Activated T-helper 2 cell treated with anti-CD3 and anti-CD28 coated beads, Interferon-gamma antibody, Interleukin-2, Interleukin-4, amounts not matched to agents 10 μg/mL and 5 μg/mL and 100 μg/mL, durations not matched to agents 14 hours and 24 hours and 36 hours (primary cell): ENCODE measurements at regions of chrX and their contacts with region 1.

Region 1: DNA sequence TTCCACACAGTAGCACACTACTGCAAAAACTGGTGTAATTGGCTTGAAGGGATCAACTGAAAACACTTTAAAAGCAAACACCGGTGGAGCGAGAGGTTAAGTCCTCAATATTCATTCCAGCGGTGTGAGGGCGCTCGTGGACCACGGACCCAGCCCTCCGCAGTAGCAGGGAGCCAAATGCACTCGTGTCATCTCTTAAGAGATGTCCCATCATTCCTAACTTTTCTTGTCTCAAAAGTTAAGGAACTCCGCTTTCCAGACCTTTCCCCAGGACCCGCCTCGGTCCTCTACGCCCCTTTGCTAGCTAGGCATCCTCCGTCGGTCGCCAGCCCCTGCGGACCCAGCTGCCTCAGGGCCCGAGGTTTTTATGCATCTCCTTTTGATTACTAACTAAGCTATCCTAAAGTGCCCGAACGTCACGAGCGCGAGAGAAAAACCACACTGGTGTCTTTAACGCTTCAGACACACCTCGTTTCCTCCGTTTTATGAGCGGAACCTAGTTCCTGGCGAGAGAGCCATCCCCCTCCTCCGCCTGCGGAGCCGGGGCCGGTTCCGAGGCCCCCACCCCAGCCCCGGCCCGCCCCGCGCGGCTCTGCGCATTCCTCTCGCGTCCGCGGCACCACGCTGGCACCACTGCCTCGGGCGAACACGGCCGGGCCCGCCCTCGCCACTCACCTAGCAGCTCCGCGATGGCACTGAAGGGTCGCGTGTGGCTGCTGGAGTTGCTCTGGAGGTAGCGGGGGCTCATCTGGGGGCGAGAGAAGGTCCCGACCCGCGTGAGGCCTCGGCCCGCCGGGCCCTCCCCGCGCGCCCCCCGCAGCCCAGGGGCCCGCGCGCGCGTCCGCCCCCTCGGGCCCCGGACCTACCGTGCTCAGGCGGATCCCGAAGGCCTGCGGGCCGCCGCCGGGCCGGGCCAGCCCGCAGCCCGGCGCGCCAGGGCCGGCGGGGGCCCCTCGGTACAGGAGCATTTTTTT is 723 bp downstream of the MORC4 start:
- DNase-seq: peak; percentile 13
- H3K4me3 Mint-ChIP-seq: peak overlapping the region; percentile 85
- H3K27ac Mint-ChIP-seq: no peak overlapping the region
- H3K4me1 Mint-ChIP-seq: peaks cover 8% of the 10 kb centered on the region
- H3K27me3 Mint-ChIP-seq: peaks cover 1% of the 10 kb centered on the region

Region 2: GRCh38 chrX:105221354-105221753 is 1777.9 kb before region 1 on chrX:
- intact Hi-C with region 1: no loop called
- DNase-seq: no peak
- H3K4me3 Mint-ChIP-seq: no peak overlapping the region
- H3K27ac Mint-ChIP-seq: no peak overlapping the region
- H3K4me1 Mint-ChIP-seq: no peaks in the 10 kb centered on the region
- H3K27me3 Mint-ChIP-seq: no peaks in the 10 kb centered on the region

Region 3: GRCh38 chrX:107429090-107429489 is 429.8 kb after region 1 on chrX:
- intact Hi-C with region 1: loop called (anchors 2 kb)
- DNase-seq: no peak
- H3K4me3 Mint-ChIP-seq: no peak overlapping the region
- H3K27ac Mint-ChIP-seq: no peak overlapping the region
- H3K4me1 Mint-ChIP-seq: no peaks in the 10 kb centered on the region
- H3K27me3 Mint-ChIP-seq: peaks cover 6% of the 10 kb centered on the region